GM12878 (cell line): ENCODE measurements at regions of chr1 and their contacts with region 1.

Region 1: DNA sequence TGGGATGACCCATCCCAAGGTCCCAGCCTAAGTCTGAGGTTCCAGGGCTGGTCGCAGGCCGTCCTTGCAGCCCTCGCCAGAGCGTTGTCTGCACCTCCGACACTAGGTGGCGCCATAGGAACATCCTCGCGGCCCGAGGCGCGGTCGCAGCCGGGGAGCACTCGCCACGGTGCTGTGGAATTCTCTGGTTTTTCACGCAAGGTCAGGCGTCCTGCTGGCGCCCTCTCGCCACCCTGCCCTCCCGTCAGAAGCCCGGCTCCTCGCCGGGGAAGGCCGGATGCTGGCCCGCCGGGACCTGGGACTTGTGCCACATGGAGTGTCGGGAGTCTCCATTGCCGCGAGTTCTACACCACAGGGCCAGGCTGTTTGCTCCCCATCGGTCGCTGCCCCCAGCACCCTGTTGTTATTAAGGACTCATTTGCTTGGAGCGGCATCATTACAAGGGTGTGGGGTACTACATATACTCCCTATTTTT is 196.8 kb upstream of the LMO4 start:
- DNase-seq: no peak
- ATAC-seq: peak; percentile 99
- H3K4me3 ChIP-seq: peak overlapping the region; percentile 74; the same call in 1 of the 2 replicates
- H3K27ac ChIP-seq: no peak overlapping the region
- H3K4me1 ChIP-seq: no peaks in the 10 kb centered on the region
- H3K27me3 ChIP-seq: no peaks in the 10 kb centered on the region
- CTCF ChIP-seq: peak; percentile 92 to 94 (median 92); a peak in 5 of 6 replicates
- EP300 ChIP-seq: no peak
- POLR2A ChIP-seq: no peak
- RAD21 ChIP-seq: peak; percentile 95

Region 2: DNA sequence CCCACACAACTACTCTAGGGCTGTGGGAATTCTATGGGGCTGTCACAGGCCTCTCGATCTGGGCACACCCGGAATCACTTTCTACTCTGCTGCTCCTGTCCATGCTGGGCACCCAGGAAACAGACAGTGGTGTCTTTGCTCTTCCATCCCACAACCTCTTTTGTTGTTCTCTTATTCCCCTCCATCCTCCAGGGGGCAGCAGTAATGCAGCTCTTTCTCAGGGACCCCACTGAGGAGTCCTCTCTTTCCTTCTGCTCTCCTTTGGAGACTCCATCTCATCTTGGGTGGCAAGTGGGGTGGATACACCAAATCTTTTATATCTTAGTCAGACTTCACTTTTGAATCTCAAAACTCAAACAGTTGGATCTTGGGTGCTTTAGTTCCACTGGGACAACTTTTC is 11.1 kb before region 1 on chr1:
- CTCF ChIA-PET with region 1: interaction called, 11 read pairs
- POLR2A ChIA-PET with region 1: no interaction called
- RAD21 ChIA-PET with region 1: no interaction called
- SMC1A ChIA-PET with region 1: interaction called, 3 read pairs
- in situ Hi-C with region 1: no loop called
- intact Hi-C with region 1: no loop called
- DNase-seq: no peak
- ATAC-seq: peak; percentile 25; the same call in 1 of the 3 replicates
- H3K4me3 ChIP-seq: no peak overlapping the region
- H3K27ac ChIP-seq: no peak overlapping the region
- H3K4me1 ChIP-seq: peaks cover 14% of the 10 kb centered on the region
- H3K27me3 ChIP-seq: no peaks in the 10 kb centered on the region
- CTCF ChIP-seq: peak in 2 of 3 experiments; percentile 37 to 43; a peak in 5 of 6 replicates
- EP300 ChIP-seq: no peak
- POLR2A ChIP-seq: no peak
- RAD21 ChIP-seq: no peak

Region 3: DNA sequence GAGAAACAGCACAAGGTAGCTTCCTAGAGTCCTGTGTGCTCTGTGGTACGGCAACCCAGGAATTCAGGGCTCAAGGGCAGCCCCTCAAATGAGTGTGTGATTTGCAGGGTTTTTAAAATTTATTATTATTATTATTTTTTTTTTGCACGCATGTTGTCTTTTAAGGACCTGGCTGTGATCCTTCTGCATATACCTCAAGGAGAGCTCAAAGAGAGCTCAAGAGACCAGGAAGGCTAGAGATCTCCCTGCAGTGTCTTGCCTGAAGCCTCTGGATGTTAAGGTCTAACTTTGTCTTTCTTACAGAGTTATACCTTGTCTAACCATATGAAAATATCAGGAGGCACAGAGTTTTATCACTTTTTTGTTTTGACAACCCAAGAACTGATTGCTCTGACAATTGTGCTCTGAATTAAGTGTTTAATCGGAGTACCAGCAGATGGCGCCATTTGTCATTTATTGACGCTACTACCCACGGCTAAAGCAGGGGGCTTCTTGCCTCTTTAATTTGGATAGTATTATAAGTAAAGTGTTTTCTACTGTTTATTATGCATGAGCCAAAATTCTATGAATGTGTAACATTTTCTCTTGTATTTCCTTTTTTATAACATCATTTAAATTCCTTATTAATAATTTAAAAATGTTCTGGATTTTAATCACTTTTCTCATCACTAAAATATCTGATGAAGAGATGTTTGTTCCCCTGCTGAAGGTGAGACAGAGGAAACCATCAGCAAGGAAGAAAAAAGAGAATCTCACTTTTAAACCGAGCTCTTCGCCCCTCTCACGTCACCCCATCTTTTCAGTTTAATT is 161.0 kb after region 1 on chr1:
- CTCF ChIA-PET with region 1: interaction called, 10 read pairs
- POLR2A ChIA-PET with region 1: no interaction called
- RAD21 ChIA-PET with region 1: no interaction called
- SMC1A ChIA-PET with region 1: interaction called, 3 read pairs
- in situ Hi-C with region 1: loop called (anchors 10 kb)
- intact Hi-C with region 1: loop called (anchors 1 kb)
- DNase-seq: no peak
- ATAC-seq: peak; percentile 87
- H3K4me3 ChIP-seq: no peak overlapping the region
- H3K27ac ChIP-seq: no peak overlapping the region
- H3K4me1 ChIP-seq: no peaks in the 10 kb centered on the region
- H3K27me3 ChIP-seq: no peaks in the 10 kb centered on the region
- CTCF ChIP-seq: peak; percentile 61 to 76 (median 74)
- EP300 ChIP-seq: no peak
- POLR2A ChIP-seq: no peak
- RAD21 ChIP-seq: peak; percentile 86

Region 4: GRCh38 chr1:87449348-87449963 is 317.6 kb after region 1 on chr1:
- CTCF ChIA-PET with region 1: no interaction called
- POLR2A ChIA-PET with region 1: no interaction called
- RAD21 ChIA-PET with region 1: no interaction called
- SMC1A ChIA-PET with region 1: no interaction called
- in situ Hi-C with region 1: no loop called
- intact Hi-C with region 1: loop called (anchors 5 kb)
- DNase-seq: peak; percentile 98
- ATAC-seq: peak; percentile 91
- H3K4me3 ChIP-seq: 0 out of 2 replicates have a peak overlapping the region, but pooled peaks have one; percentile 4
- H3K27ac ChIP-seq: peak overlapping the region; percentile 48
- H3K4me1 ChIP-seq: peaks cover 19% of the 10 kb centered on the region
- H3K27me3 ChIP-seq: no peaks in the 10 kb centered on the region
- CTCF ChIP-seq: no peak
- EP300 ChIP-seq: peak; percentile 85 to 90
- POLR2A ChIP-seq: peak; percentile 65
- RAD21 ChIP-seq: no peak; the same call in 1 of the 2 replicates

Region 5: GRCh38 chr1:87953732-87954344 is 822.0 kb after region 1 on chr1:
- CTCF ChIA-PET with region 1: interaction called, 6 read pairs
- POLR2A ChIA-PET with region 1: no interaction called
- RAD21 ChIA-PET with region 1: no interaction called
- SMC1A ChIA-PET with region 1: interaction called, 6 read pairs
- in situ Hi-C with region 1: loop called (anchors 10 kb)
- intact Hi-C with region 1: loop called (anchors 1 kb)
- DNase-seq: no peak
- ATAC-seq: peak; percentile 95
- H3K4me3 ChIP-seq: no peak overlapping the region
- H3K27ac ChIP-seq: no peak overlapping the region
- H3K4me1 ChIP-seq: no peaks in the 10 kb centered on the region
- H3K27me3 ChIP-seq: no peaks in the 10 kb centered on the region; a peak in 1 of 4 replicates
- CTCF ChIP-seq: peak; percentile 75 to 85 (median 76)
- EP300 ChIP-seq: no peak
- POLR2A ChIP-seq: no peak
- RAD21 ChIP-seq: peak; percentile 89

Region 6: GRCh38 chr1:88595355-88596002 is 1463.6 kb after region 1 on chr1:
- CTCF ChIA-PET with region 1: no interaction called
- POLR2A ChIA-PET with region 1: no interaction called
- RAD21 ChIA-PET with region 1: no interaction called
- SMC1A ChIA-PET with region 1: no interaction called
- in situ Hi-C with region 1: no loop called
- intact Hi-C with region 1: loop called (anchors 10 kb)
- DNase-seq: peak; percentile 12
- ATAC-seq: peak; percentile 39
- H3K4me3 ChIP-seq: no peak overlapping the region
- H3K27ac ChIP-seq: no peak overlapping the region
- H3K4me1 ChIP-seq: no peaks in the 10 kb centered on the region
- H3K27me3 ChIP-seq: no peaks in the 10 kb centered on the region
- CTCF ChIP-seq: peak; percentile 20 to 53 (median 33); a peak in 5 of 6 replicates
- EP300 ChIP-seq: no peak
- POLR2A ChIP-seq: no peak
- RAD21 ChIP-seq: peak; percentile 69